Motor neuron (in vitro differentiated cells): ENCODE measurements at regions of chr3 and their contacts with region 1.

Region 1: GRCh38 chr3:46733026-46733800 is 15.5 kb upstream of the PRSS50 start:
- ATAC-seq: no peak
- H3K4me3 ChIP-seq: no peak overlapping the region
- H3K27ac ChIP-seq: no peak overlapping the region
- H3K4me1 ChIP-seq: no peaks in the 10 kb centered on the region

Region 2: DNA sequence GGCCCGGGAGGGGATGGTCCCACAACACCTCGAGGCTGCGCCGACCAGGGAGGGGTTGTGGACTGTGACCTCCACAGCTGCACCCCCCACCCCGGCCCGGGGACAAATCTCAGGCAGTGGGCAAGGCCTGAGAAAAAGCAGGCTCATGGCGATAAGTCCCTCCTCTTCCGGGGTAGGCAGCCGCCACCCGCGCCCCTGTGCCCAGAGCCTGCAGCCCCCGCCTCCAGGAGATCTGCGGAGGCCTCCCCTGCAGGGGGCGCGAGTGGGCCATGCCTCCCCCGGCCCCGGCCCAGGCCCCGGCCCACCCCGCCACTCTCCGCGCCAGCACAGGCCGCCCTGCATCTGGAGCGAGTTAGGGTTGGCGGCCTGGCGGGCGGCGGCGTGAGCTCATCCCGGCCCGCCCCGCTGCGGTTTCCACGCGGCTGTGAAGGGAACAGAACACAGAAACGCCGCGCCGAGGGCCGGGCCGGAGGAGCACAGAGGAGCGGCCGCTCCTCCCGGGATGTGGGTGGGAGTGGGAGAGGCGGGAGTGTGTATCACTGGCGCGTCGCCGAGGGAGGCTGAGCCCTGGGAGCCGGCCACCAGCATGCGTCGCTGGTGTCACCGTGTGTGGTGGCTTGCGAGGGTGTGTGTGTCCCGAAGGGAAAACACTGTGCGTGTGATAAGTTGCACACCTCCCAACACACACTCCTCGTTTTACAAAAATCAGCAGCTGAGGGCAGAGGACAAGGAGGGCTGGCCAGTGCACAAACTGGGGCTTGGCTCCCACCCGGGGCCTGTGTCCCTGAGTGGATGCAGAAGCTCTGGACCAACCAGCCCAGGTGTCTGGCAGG is 112.8 kb after region 1 on chr3:
- in situ Hi-C with region 1: loop called in 1 of 9 experiments (anchors 25 kb)
- ATAC-seq: peak; percentile 45 to 95 (median 85)
- H3K4me3 ChIP-seq: no peak overlapping the region
- H3K27ac ChIP-seq: no peak overlapping the region
- H3K4me1 ChIP-seq: peaks cover 8 to 11% of the 10 kb centered on the region in 2 donors